Left cardiac atrium (tissue), 4 donors: ENCODE measurements at regions of chr9 and their contacts with region 1.

Region 1: GRCh38 chr9:34185778-34186551 is 7.1 kb downstream of the UBAP1 start:
- DNase-seq: peak; percentile 52
- ATAC-seq: peak; percentile 96 to 97

Region 2: DNA sequence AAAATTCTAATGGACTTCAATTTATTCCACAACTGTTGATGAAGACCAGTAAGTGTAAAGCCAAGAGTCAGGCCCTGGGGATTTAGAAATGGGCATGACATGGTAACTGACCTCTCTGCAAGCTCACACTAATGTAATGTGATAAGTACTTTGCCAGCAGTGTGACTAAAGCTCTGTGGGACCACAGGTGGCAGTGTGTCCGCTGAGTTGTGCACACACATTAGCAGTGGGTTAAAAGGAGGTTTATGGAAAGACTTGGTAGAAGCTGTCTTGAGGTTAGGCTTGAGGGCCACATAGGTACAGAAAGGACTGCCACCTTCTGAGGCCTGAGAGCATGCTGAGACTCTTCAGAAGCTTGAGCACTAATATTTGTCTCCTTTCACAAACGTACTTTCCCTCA is 60.5 kb after region 1 on chr9:
- intact Hi-C with region 1: loop called in 1 of 2 experiments (anchors 10 kb)
- DNase-seq: no peak
- ATAC-seq: peak in 1 of 2 donors; percentile 16